Naive thymus-derived CD4-positive, alpha-beta T cell (primary cell): ENCODE measurements at regions of chr3 and their contacts with region 1.

Region 1: GRCh38 chr3:186108941-186109865 is at the start of gene ETV5:
- DNase-seq: peak; percentile 65 to 91 (median 79)
- ATAC-seq: peak; percentile 97
- H3K4me3 ChIP-seq: peak within 1 kb of the TSS; percentile 71
- H3K4me3 Mint-ChIP-seq: peak within 1 kb of the TSS; percentile 86 to 97 (median 90)
- H3K27ac ChIP-seq: no peak within 1 kb of the TSS
- H3K27ac Mint-ChIP-seq: peak within 1 kb of the TSS in 5 of 9 donors; percentile 7 to 90 (median 60)
- H3K4me1 ChIP-seq: peaks cover 23 to 35% of the 10 kb centered on the region in 2 donors
- H3K4me1 Mint-ChIP-seq: peaks cover 34 to 38% (median 38%) of the 10 kb centered on the region in 7 donors
- H3K27me3 ChIP-seq: peaks cover 22 to 54% of the 10 kb centered on the region in 2 donors
- H3K27me3 Mint-ChIP-seq: peaks cover 84 to 87% (median 86%) of the 10 kb centered on the region in 5 donors
- total RNA-seq, gene ETV5: 0.56 to 2.3 (median 0.97) TPM in 4 of 5 experiments, not detected in the other

Region 2: GRCh38 chr3:185976977-185977678 is 132.1 kb before region 1 on chr3:
- CTCF ChIA-PET with region 1: no interaction called
- POLR2A ChIA-PET with region 1: no interaction called
- intact Hi-C with region 1: loop called in 1 of 2 experiments (anchors 2 kb)
- DNase-seq: peak; percentile 47 to 84 (median 70)
- ATAC-seq: peak; percentile 96
- H3K4me3 ChIP-seq: no peak overlapping the region
- H3K4me3 Mint-ChIP-seq: peak overlapping the region in 1 of 10 donors; percentile 5
- H3K27ac ChIP-seq: no peak overlapping the region
- H3K27ac Mint-ChIP-seq: peak overlapping the region in 1 of 9 donors; percentile 21
- H3K4me1 ChIP-seq: no peaks in the 10 kb centered on the region
- H3K4me1 Mint-ChIP-seq: peaks cover 4 to 10% (median 9%) of the 10 kb centered on the region in 7 donors
- H3K27me3 ChIP-seq: no peaks in the 10 kb centered on the region
- H3K27me3 Mint-ChIP-seq: peaks cover 0 to 19% (median 0%) of the 10 kb centered on the region in 5 donors

Region 3: DNA sequence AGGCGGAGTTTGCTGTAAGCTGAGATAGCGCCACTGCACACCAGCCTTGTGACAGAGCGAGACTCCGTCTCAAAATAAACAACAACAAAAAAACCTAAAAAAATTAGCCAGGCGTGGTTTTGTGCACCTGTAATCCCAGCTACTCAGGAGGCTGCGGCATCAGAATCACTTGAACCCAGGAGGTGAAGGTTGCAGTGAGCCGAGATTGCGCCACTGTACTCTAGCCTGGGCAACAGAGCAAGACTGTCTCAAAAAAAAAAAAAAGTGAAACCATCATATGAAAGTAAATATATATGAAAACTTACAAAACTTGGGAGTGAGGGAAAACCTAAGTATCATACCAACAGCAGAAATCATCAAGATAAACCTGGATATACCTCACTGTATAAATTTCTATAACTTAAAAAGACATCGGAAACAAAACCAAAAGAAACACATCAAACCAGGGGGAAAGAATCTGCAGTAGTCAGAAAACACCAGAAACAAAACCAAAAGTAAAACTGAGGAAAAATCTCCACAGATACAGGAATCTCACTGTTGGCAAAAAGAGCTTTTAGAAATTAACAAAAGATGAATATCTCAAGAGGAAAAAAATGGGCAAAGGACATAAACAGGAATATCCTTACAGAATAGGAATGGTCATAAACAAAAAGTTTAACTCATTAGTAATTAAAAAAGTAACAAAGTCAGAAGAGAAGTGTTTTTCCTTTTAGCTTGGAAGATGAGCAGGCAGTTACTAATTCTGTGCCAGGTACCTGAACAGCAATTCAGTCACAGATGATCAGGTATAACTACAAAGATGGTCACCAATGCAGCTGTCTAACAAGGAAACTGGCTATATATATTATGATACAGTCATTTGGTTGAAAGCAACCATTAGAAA is 41.6 kb before region 1 on chr3:
- CTCF ChIA-PET with region 1: no interaction called
- POLR2A ChIA-PET with region 1: no interaction called
- intact Hi-C with region 1: loop called in 1 of 2 experiments (anchors 2 kb)
- DNase-seq: peak in 4 of 9 donors; percentile 2 to 21 (median 11)
- ATAC-seq: peak; percentile 41
- H3K4me3 ChIP-seq: peak overlapping the region; percentile 24
- H3K4me3 Mint-ChIP-seq: peak overlapping the region; percentile 54 to 93 (median 80)
- H3K27ac ChIP-seq: no peak overlapping the region
- H3K27ac Mint-ChIP-seq: peak overlapping the region; percentile 25 to 81 (median 47)
- H3K4me1 ChIP-seq: no peaks in the 10 kb centered on the region
- H3K4me1 Mint-ChIP-seq: peaks cover 3 to 19% (median 16%) of the 10 kb centered on the region in 7 donors
- H3K27me3 ChIP-seq: no peaks in the 10 kb centered on the region
- H3K27me3 Mint-ChIP-seq: peaks cover 5 to 46% (median 12%) of the 10 kb centered on the region in 5 donors

Region 4: GRCh38 chr3:186152889-186153292 is 43.7 kb after region 1 on chr3:
- CTCF ChIA-PET with region 1: no interaction called
- POLR2A ChIA-PET with region 1: no interaction called
- intact Hi-C with region 1: loop called in 1 of 2 experiments (anchors 5 kb)
- DNase-seq: no peak
- ATAC-seq: peak; percentile 82
- H3K4me3 ChIP-seq: no peak overlapping the region
- H3K4me3 Mint-ChIP-seq: no peak overlapping the region
- H3K27ac ChIP-seq: no peak overlapping the region
- H3K27ac Mint-ChIP-seq: no peak overlapping the region
- H3K4me1 ChIP-seq: no peaks in the 10 kb centered on the region
- H3K4me1 Mint-ChIP-seq: peaks cover 7 to 15% (median 9%) of the 10 kb centered on the region in 7 donors
- H3K27me3 ChIP-seq: peaks cover 0 to 5% of the 10 kb centered on the region in 2 donors
- H3K27me3 Mint-ChIP-seq: peaks cover 24 to 60% (median 36%) of the 10 kb centered on the region in 5 donors

Region 5: DNA sequence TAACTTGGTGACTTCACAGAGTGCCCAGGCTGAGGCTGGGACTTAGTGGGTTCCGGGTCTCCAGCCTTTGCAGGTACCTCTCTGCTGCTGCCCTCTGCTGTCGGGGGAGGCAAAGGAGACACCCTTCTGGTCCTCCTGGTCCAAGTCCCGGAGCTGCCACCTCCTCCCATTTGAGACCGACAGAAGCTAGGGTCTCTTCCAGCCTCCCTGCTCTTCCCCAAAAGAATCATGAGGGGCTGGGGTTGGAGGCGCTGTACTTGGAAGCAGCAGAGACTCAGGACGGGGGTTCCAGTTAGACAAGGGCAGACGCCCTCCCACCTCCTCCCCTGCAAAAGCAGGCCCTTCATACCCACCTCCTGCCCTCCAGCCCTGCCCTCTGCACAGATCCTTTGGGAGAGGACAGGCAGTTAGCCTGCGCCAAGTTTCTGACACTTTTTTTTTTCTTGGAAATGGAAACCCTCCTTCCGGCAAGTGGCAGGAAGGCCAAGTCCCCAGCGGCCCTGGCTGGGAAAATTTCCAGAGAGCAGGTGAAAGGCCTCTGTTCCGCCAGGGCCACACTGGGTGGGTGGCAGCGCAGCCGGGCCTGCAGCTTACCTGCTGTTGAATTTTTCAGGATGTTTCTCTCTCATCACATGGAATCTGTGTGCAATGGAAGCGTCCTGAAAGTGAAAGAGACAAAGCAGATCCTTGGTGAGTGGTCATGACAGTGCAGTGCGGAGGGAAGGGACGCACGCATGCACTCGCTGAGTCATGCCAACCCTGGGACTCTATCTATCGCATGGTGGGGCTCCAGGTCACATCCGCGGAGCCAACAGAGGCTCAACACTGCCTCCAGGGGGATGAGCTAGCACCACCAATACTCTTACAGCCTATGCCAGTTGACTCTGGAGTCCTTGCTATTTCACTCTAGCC is 133.0 kb after region 1 on chr3:
- CTCF ChIA-PET with region 1: no interaction called
- POLR2A ChIA-PET with region 1: no interaction called
- intact Hi-C with region 1: loop called in 1 of 2 experiments (anchors 2 kb)
- DNase-seq: peak in 3 of 9 donors; percentile 23 to 46 (median 31)
- ATAC-seq: peak; percentile 92
- H3K4me3 ChIP-seq: no peak overlapping the region
- H3K4me3 Mint-ChIP-seq: peak overlapping the region in 6 of 10 donors; percentile 12 to 63 (median 19)
- H3K27ac ChIP-seq: no peak overlapping the region
- H3K27ac Mint-ChIP-seq: no peak overlapping the region
- H3K4me1 ChIP-seq: no peaks in the 10 kb centered on the region
- H3K4me1 Mint-ChIP-seq: peaks cover 0 to 12% (median 0%) of the 10 kb centered on the region in 7 donors
- H3K27me3 ChIP-seq: no peaks in the 10 kb centered on the region
- H3K27me3 Mint-ChIP-seq: peaks cover 0 to 10% (median 4%) of the 10 kb centered on the region in 5 donors

Region 6: GRCh38 chr3:186806089-186807055 is 697.2 kb after region 1 on chr3 and contains the start of gene RFC4:
- CTCF ChIA-PET with region 1: no interaction called
- POLR2A ChIA-PET with region 1: no interaction called
- intact Hi-C with region 1: loop called in 1 of 2 experiments (anchors 2 kb)
- DNase-seq: peak; percentile 66 to 86 (median 82)
- ATAC-seq: peak; percentile 91
- H3K4me3 ChIP-seq: peak within 1 kb of the TSS; percentile 95
- H3K4me3 Mint-ChIP-seq: peak within 1 kb of the TSS; percentile 89 to 97 (median 94)
- H3K27ac ChIP-seq: peak within 1 kb of the TSS; percentile 86
- H3K27ac Mint-ChIP-seq: peak within 1 kb of the TSS; percentile 84 to 97 (median 95)
- H3K4me1 ChIP-seq: peaks cover 17 to 21% of the 10 kb centered on the region in 2 donors
- H3K4me1 Mint-ChIP-seq: peaks cover 5 to 38% (median 18%) of the 10 kb centered on the region in 7 donors
- H3K27me3 ChIP-seq: no peaks in the 10 kb centered on the region
- H3K27me3 Mint-ChIP-seq: no peaks in the 10 kb centered on the region
- total RNA-seq, gene RFC4: 8.7 to 71.6 (median 22.1) TPM

Region 7: DNA sequence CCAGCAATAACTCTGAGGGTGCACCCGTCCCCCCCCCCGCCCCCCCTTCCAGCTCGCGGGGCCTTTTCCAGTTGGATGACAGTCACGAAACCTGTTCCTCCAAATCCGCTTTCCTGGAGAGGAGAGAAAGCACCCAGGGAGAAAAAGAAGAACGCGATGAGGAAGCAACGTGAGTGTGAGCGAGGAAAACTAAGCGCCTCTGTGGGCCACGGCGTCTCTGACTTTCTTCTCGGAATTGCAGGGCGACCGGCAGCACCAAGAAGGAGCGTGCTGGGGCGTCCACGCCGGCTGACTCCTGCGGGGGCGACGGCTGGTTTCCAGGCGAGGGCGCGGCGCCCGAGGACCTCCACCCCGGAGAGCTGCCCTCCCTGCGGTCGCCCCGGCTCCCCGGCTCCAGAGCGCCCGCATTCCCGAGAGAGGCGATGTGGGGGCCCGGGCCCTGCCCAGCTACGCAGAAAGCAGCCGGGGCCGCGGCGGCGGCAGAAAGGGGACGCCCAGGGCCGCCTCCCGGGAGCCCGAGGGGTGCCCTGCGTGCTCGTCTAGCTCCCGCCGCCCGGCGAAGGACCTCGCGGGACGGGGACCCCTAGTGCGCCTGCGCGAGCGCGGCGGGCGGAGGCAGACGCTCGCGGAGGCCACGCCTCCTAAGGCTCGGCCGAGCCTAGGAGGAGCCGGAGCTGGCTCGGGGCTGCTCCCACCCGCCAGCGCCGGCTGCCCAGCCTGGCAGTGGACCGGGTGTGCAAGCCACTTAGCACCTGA is 718.0 kb after region 1 on chr3:
- CTCF ChIA-PET with region 1: no interaction called
- POLR2A ChIA-PET with region 1: no interaction called
- intact Hi-C with region 1: loop called in 1 of 2 experiments (anchors 2 kb)
- DNase-seq: peak; percentile 79 to 92 (median 87)
- ATAC-seq: peak; percentile 96
- H3K4me3 ChIP-seq: peak overlapping the region; percentile 66
- H3K4me3 Mint-ChIP-seq: peak overlapping the region; percentile 53 to 91 (median 80)
- H3K27ac ChIP-seq: peak overlapping the region; percentile 52
- H3K27ac Mint-ChIP-seq: peak overlapping the region in 2 of 9 donors; percentile 18 to 19
- H3K4me1 ChIP-seq: peaks cover 6 to 21% of the 10 kb centered on the region in 2 donors
- H3K4me1 Mint-ChIP-seq: peaks cover 15 to 24% (median 20%) of the 10 kb centered on the region in 7 donors
- H3K27me3 ChIP-seq: peaks cover 0 to 22% of the 10 kb centered on the region in 2 donors
- H3K27me3 Mint-ChIP-seq: peaks cover 45 to 61% (median 52%) of the 10 kb centered on the region in 5 donors